ENCODE measurements at regions of chrX and their contacts with region 1.

Region 1: GRCh38 chrX:153333768-153334645 is at the start of gene ZNF275:
- DNase-seq: peak; percentile 56 to 90 (median 78)
- ATAC-seq: peak; percentile 97
- H3K4me3 ChIP-seq: peak within 1 kb of the TSS; percentile 61 to 76
- H3K4me3 Mint-ChIP-seq: peak within 1 kb of the TSS; percentile 82
- H3K27ac ChIP-seq: peak within 1 kb of the TSS in 1 of 2 experiments; percentile 68
- H3K27ac Mint-ChIP-seq: peak within 1 kb of the TSS; percentile 79
- H3K4me1 ChIP-seq: peaks cover 40% of the 10 kb centered on the region
- H3K4me1 Mint-ChIP-seq: peaks cover 46% of the 10 kb centered on the region
- H3K27me3 ChIP-seq: no peaks in the 10 kb centered on the region
- H3K27me3 Mint-ChIP-seq: peaks cover under 1% of the 10 kb centered on the region
- CTCF ChIP-seq: no peak
- total RNA-seq, gene ZNF275: 11.3 to 11.6 TPM

Region 2: GRCh38 chrX:152958524-152959465 is 375.2 kb before region 1 on chrX:
- CTCF ChIA-PET with region 1: no interaction called
- POLR2A ChIA-PET with region 1: no interaction called
- intact Hi-C with region 1: loop called in 1 of 2 experiments (anchors 5 kb)
- DNase-seq: peak; percentile 82 to 97 (median 90)
- ATAC-seq: peak; percentile 97
- H3K4me3 ChIP-seq: peak overlapping the region; percentile 29 to 34
- H3K4me3 Mint-ChIP-seq: peak overlapping the region; percentile 71
- H3K27ac ChIP-seq: peak overlapping the region; percentile 48 to 73
- H3K27ac Mint-ChIP-seq: peak overlapping the region; percentile 89
- H3K4me1 ChIP-seq: peaks cover 6% of the 10 kb centered on the region
- H3K4me1 Mint-ChIP-seq: peaks cover 5% of the 10 kb centered on the region
- H3K27me3 ChIP-seq: no peaks in the 10 kb centered on the region
- H3K27me3 Mint-ChIP-seq: no peaks in the 10 kb centered on the region
- CTCF ChIP-seq: peak; percentile 66

Region 3: DNA sequence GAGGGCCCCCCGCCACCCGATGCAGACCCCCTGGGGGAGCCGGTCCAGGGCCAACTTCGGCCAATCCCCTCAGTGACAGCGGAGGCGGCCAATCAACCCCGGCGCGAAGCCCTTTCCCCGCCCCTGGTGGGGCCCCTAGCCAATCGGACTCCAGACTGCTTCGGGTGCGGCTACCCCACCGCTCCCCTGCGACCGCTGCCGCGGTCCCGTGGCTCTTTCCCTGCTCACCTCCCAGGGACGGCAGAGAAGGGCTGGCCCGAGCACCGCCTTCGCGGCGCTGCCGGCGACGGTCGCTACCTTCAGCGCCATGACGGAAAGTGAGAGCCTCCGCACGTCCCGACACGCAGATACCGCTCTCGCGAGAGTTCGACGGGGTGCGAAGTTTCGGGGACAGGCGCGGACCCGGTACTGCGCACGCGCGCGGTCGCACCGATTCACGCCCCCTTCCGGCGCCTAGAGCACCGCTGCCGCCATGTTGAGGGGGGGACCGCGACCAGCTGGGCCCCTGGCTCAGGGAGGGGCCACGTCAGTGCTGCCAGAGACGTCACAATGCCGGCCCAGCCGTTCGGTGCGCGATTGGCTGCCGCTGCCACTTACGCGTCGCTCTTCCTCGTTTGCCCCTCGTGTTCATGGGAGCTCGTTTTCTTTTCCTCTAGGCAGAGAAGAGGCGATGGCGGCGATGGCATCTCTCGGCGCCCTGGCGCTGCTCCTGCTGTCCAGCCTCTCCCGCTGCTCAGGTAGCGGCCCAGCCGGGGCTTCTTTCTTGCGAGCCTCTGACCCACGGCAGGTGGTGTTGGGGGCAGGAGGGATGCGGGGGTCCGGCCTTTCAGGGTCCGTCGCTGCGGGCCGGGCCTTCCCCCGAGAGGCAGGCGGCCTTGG is 460.2 kb after region 1 on chrX and contains the starts of genes IDH3G and SSR4:
- CTCF ChIA-PET with region 1: no interaction called
- POLR2A ChIA-PET with region 1: no interaction called
- intact Hi-C with region 1: loop called in 1 of 2 experiments (anchors 5 kb)
- DNase-seq: peak; percentile 84 to 96 (median 90)
- ATAC-seq: peak; percentile 92
- H3K4me3 ChIP-seq: peak within 1 kb of the TSS; percentile 83 to 86
- H3K4me3 Mint-ChIP-seq: peak within 1 kb of the TSS; percentile 90
- H3K27ac ChIP-seq: peak within 1 kb of the TSS; percentile 92 to 95
- H3K27ac Mint-ChIP-seq: peak within 1 kb of the TSS; percentile 95
- H3K4me1 ChIP-seq: peaks cover 34% of the 10 kb centered on the region
- H3K4me1 Mint-ChIP-seq: peaks cover 30% of the 10 kb centered on the region
- H3K27me3 ChIP-seq: no peaks in the 10 kb centered on the region
- H3K27me3 Mint-ChIP-seq: no peaks in the 10 kb centered on the region
- CTCF ChIP-seq: no peak
- total RNA-seq, gene IDH3G: 55.8 to 56.5 TPM
- total RNA-seq, gene SSR4: 175 TPM